Naive thymus-derived CD4-positive, alpha-beta T cell (primary cell): ENCODE measurements at regions of chr4 and their contacts with region 1.

Region 1: GRCh38 chr4:1870578-1871443 is at the start of gene NSD2:
- DNase-seq: peak; percentile 79 to 95 (median 86)
- ATAC-seq: peak; percentile 86
- H3K4me3 ChIP-seq: peak within 1 kb of the TSS; percentile 86
- H3K4me3 Mint-ChIP-seq: peak within 1 kb of the TSS; percentile 84 to 98 (median 89)
- H3K27ac ChIP-seq: peak within 1 kb of the TSS; percentile 99
- H3K27ac Mint-ChIP-seq: peak within 1 kb of the TSS; percentile 91 to 96 (median 95)
- H3K4me1 ChIP-seq: peaks cover 15 to 20% of the 10 kb centered on the region in 2 donors
- H3K4me1 Mint-ChIP-seq: peaks cover 12 to 37% (median 34%) of the 10 kb centered on the region in 7 donors
- H3K27me3 ChIP-seq: no peaks in the 10 kb centered on the region
- H3K27me3 Mint-ChIP-seq: peaks cover 0 to 4% (median 0%) of the 10 kb centered on the region in 5 donors
- total RNA-seq, gene NSD2: 35.4 to 207 (median 38.5) TPM

Region 2: GRCh38 chr4:1712216-1713002 is 158.4 kb before region 1 on chr4 and contains the start of gene SLBP:
- CTCF ChIA-PET with region 1: no interaction called
- POLR2A ChIA-PET with region 1: interaction called, 10 read pairs
- intact Hi-C with region 1: loop called (anchors 1 to 2 kb)
- DNase-seq: peak; percentile 98 to 99 (median 98)
- ATAC-seq: peak; percentile 92
- H3K4me3 ChIP-seq: peak within 1 kb of the TSS; percentile 100
- H3K4me3 Mint-ChIP-seq: peak within 1 kb of the TSS; percentile 89 to 98 (median 94)
- H3K27ac ChIP-seq: peak within 1 kb of the TSS; percentile 99
- H3K27ac Mint-ChIP-seq: peak within 1 kb of the TSS; percentile 90 to 98 (median 94)
- H3K4me1 ChIP-seq: peaks cover 32 to 34% of the 10 kb centered on the region in 2 donors
- H3K4me1 Mint-ChIP-seq: peaks cover 11 to 67% (median 59%) of the 10 kb centered on the region in 7 donors
- H3K27me3 ChIP-seq: no peaks in the 10 kb centered on the region
- H3K27me3 Mint-ChIP-seq: no peaks in the 10 kb centered on the region
- total RNA-seq, gene SLBP: 29.5 to 103 (median 30.3) TPM

Region 3: GRCh38 chr4:1837069-1837468 is 33.7 kb before region 1 on chr4:
- CTCF ChIA-PET with region 1: no interaction called
- POLR2A ChIA-PET with region 1: no interaction called
- intact Hi-C with region 1: no loop called
- DNase-seq: no peak
- ATAC-seq: no peak
- H3K4me3 ChIP-seq: no peak overlapping the region
- H3K4me3 Mint-ChIP-seq: no peak overlapping the region
- H3K27ac ChIP-seq: no peak overlapping the region
- H3K27ac Mint-ChIP-seq: peak overlapping the region in 1 of 9 donors; percentile 41
- H3K4me1 ChIP-seq: no peaks in the 10 kb centered on the region
- H3K4me1 Mint-ChIP-seq: peaks cover 0 to 15% (median 7%) of the 10 kb centered on the region in 7 donors
- H3K27me3 ChIP-seq: no peaks in the 10 kb centered on the region
- H3K27me3 Mint-ChIP-seq: no peaks in the 10 kb centered on the region

Region 4: DNA sequence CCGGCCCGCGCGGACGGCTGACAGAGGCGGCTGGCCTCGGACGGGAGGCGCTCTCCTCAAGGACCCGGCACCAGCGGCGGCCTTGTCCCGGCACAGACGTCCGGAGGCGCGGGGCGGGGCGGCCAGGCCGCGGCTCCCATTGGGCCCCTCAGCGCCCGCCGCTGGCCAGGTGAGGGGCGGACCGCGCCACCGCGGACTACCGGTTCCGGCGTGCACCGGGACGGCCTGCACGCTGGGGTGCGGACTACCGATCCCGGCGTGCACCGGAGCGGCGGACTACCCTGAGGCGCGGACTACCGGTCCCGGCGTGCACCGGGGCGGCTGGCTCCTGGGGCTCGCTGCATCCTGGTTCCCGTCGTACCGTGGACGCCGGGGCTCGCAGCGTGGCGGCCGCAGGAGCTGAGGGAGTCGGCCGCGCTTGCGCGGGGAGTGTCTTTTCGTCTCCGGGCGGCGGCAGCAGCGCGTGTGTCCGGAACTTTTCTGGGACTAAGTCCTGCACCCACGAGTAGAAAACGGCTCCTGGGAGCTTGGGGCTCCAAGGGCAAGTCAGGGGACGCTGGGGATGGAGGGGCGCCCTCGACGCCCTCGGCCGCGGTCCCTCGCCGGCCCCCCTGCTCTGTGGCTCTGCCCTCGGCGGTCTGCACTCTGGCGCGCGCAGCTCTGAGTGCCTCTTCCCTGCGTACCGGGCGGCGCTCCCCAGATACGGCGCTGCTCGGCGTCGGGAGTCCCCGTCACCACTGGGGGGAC is 14.6 kb before region 1 on chr4 and contains the start of gene LETM1:
- CTCF ChIA-PET with region 1: interaction called, 3 read pairs
- POLR2A ChIA-PET with region 1: interaction called, 74 read pairs
- intact Hi-C with region 1: loop called (anchors 1 kb)
- DNase-seq: peak; percentile 79 to 96 (median 88)
- ATAC-seq: peak; percentile 98
- H3K4me3 ChIP-seq: peak within 1 kb of the TSS; percentile 86
- H3K4me3 Mint-ChIP-seq: peak within 1 kb of the TSS; percentile 67 to 88 (median 83)
- H3K27ac ChIP-seq: peak within 1 kb of the TSS; percentile 70
- H3K27ac Mint-ChIP-seq: peak within 1 kb of the TSS in 8 of 9 donors; percentile 17 to 80 (median 48)
- H3K4me1 ChIP-seq: peaks cover 10 to 14% of the 10 kb centered on the region in 2 donors
- H3K4me1 Mint-ChIP-seq: peaks cover 31 to 45% (median 41%) of the 10 kb centered on the region in 7 donors
- H3K27me3 ChIP-seq: no peaks in the 10 kb centered on the region
- H3K27me3 Mint-ChIP-seq: no peaks in the 10 kb centered on the region
- total RNA-seq, gene LETM1: 29.5 to 56.4 (median 36.0) TPM

Region 5: GRCh38 chr4:1899149-1900086 is 28.6 kb after region 1 on chr4:
- CTCF ChIA-PET with region 1: interaction called, 8 read pairs
- POLR2A ChIA-PET with region 1: no interaction called
- intact Hi-C with region 1: loop called (anchors 1 to 2 kb)
- DNase-seq: peak; percentile 55 to 82 (median 76)
- ATAC-seq: peak; percentile 97
- H3K4me3 ChIP-seq: no peak overlapping the region
- H3K4me3 Mint-ChIP-seq: peak overlapping the region in 4 of 10 donors; percentile 18 to 64 (median 42)
- H3K27ac ChIP-seq: no peak overlapping the region
- H3K27ac Mint-ChIP-seq: peak overlapping the region in 4 of 9 donors; percentile 2 to 87 (median 17)
- H3K4me1 ChIP-seq: no peaks in the 10 kb centered on the region
- H3K4me1 Mint-ChIP-seq: peaks cover 7 to 66% (median 11%) of the 10 kb centered on the region in 7 donors
- H3K27me3 ChIP-seq: no peaks in the 10 kb centered on the region
- H3K27me3 Mint-ChIP-seq: no peaks in the 10 kb centered on the region